OCI-LY7 (cell line): ENCODE measurements at regions of chr5 and their contacts with region 1.

Region 1: DNA sequence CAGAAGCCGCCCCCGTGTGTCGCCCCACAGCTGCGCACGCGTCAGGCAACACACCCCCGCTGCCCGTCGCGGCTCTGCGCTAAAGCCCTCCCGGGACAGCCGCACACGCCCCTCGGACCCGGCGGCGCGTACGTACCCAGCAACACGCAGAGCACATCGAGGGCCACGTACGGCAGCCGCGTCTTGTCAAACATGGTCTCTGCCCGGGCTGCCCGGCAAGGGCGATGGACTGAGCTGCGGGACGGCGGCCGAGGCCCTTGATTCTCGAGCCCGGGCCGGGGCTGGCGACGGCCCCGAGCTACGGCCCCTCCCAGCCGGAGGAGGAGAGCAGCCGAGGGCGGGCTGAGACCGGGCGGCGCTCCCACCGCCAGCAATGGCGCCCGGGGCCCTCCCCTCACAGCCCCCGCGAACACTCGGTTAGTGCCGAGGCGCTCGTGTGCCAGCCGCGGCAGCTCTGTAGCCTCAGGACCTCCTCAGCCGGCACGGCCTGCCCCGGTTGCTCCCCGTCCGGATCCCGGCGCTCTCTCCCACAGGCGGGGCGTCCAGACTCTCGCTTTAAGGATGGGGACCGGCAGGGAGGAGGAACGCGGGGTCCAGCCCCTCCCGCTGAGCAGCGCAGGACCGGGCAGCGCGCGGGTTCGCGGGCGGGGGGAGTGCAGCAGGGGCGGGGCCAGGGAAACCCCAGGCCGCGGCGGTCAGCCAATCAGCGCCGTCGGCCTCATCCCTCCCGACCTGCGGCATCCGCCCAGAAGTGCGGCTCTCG is at the start of gene PLPP1:
- DNase-seq: peak; percentile 80
- H3K4me3 ChIP-seq: peak within 1 kb of the TSS; percentile 84
- H3K27ac ChIP-seq: peak within 1 kb of the TSS; percentile 8
- H3K4me1 ChIP-seq: peaks cover 31% of the 10 kb centered on the region
- CTCF ChIP-seq: no peak
- total RNA-seq, gene PLPP1: 2.3 and 2.5 TPM in 2 replicates

Region 2: DNA sequence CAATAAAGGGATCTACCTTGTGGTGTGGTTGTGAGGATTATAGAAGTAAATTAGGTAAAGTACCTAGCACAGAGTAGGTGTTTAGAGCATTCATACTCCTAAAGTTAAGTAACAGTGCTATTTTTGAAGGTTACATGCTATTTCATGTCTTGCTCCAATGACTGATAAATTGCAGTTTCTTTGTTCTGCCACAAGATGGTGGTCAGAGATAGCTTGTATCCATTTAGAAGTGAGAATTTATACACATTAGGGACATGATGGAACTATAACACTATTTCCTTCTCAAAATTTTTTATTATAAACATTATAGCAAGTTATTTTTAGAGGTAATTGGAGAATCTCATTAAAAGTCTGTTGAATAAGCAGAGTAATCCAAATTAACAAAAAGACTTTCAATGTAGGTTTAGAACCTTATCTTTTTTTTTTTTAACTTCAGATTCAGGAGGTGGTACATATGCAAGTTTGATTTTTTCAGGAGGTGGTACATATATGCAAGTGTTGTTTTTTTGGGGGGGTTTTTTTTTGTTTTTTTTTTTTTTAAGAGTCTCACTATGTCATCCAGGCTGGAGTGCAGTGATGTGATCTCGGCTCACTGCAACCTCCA is 209.7 kb before region 1 on chr5:
- CTCF ChIA-PET with region 1: no interaction called
- POLR2A ChIA-PET with region 1: no interaction called
- intact Hi-C with region 1: loop called (anchors 10 kb)
- DNase-seq: peak; percentile 41
- H3K4me3 ChIP-seq: no peak overlapping the region
- H3K27ac ChIP-seq: no peak overlapping the region
- H3K4me1 ChIP-seq: no peaks in the 10 kb centered on the region
- CTCF ChIP-seq: peak; percentile 79

Region 3: DNA sequence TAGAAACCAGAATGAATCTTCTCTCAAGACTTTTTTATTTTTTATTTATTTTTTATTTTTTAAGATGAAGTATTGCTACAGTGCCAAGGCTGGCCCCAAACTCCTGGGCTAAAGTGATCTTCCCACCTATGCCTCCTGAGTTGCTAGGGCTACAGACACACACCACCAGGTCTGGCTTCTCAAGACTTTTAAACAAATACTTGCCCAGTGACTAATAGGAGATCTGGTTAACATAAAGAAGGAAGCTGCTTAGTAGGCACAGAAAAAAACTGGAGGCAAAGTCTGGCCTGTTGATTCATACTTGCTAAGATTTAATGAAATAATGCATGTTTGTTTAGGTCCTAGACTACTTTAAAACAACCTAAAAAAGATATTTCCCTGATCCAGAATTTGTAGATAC is 133.7 kb after region 1 on chr5:
- CTCF ChIA-PET with region 1: no interaction called
- POLR2A ChIA-PET with region 1: interaction called, 3 read pairs
- intact Hi-C with region 1: loop called (anchors 5 kb)
- DNase-seq: peak; percentile 11
- H3K4me3 ChIP-seq: no peak overlapping the region
- H3K27ac ChIP-seq: peak overlapping the region; percentile 23
- H3K4me1 ChIP-seq: peaks cover 30% of the 10 kb centered on the region
- CTCF ChIP-seq: no peak

Region 4: GRCh38 chr5:56791396-56791795 is 1256.8 kb after region 1 on chr5:
- CTCF ChIA-PET with region 1: no interaction called
- POLR2A ChIA-PET with region 1: no interaction called
- intact Hi-C with region 1: no loop called
- DNase-seq: no peak
- H3K4me3 ChIP-seq: no peak overlapping the region
- H3K27ac ChIP-seq: no peak overlapping the region
- H3K4me1 ChIP-seq: no peaks in the 10 kb centered on the region
- CTCF ChIP-seq: no peak